Sciatic nerve (tissue), 2 donors: ENCODE measurements at regions of chr10 and their contacts with region 1.

Region 1: DNA sequence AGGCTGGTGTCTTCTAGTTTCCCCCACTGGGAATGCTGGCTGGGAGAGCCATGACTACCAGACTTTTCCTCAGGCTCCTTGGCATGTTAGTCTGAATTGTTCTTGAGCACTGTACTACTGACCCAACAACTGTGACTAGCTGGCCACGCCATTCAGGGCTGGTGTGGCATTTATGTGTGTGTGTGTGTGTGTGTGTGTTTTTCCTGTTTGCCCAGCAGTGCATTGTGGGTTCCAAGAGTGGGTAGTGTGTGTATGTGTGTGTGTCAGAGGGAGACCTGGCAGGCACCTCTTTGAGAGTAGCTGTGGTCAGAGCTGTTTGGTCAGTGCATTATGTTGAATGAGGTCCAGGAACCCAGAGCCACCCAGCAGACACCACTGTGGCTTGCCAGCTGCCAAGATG is 9.2 kb downstream of the PCBD1 start:
- DNase-seq: no peak
- ATAC-seq: no peak

Region 2: DNA sequence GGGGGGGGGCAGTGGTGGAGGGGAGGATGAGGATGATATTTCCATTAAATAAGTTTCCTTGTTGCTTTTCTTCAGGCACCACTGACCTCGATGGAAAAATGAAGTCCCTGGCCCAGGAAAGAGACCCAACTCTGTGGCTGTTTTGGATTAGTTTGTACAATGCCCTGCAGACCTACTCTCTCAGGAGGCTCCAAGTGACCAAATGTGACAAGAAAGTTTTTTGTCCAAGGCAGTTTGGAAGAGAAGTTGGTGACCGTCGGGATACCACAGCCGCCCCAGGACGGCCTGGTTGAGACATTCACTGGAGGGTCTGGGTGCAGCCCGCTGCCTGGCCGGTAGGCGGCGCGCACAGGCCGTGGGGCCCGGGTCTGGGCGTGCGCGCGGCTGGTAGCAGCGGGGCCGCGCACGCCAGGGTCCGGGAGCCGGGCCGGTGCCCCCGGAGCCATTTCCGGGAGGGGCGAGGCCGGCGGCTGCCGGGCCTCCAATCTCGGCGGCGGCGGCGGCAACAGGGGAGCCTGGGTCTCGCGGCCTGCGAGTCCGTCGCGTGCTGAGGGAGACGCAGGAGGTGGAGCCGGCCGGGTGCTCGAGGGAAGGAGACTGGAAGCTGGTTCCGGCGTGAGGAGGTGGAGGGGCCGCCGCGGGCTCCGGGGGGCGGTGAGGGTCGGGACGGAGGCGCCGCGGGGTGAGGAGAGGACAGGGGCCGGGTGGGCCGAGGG is 63.5 kb before region 1 on chr10 and contains the start of gene SGPL1:
- intact Hi-C with region 1: loop called (anchors 2 kb)
- DNase-seq: peak; percentile 92
- ATAC-seq: peak; percentile 94
- total RNA-seq, gene SGPL1: 44.6 TPM

Region 3: DNA sequence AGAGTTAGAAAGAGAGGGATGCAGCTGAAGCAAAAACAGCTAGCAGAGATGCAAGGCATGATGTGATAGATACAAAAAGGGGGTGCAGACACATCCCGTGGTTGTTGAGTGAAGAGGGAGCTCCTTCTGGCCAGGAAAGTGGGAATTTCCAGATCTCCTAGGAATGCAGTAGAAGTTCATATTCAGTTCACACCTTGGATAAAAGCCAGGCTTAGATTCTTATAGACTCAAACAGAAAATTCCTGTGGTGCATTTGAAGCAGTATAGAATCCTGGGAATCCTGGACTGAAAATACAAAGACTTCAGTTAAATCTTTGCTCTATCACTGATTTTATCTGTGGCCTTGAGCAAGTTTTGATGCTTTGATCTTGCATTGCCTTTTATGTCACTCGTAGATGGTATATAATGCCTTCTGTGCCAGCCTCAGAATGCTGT is 29.6 kb before region 1 on chr10:
- intact Hi-C with region 1: no loop called
- DNase-seq: no peak
- ATAC-seq: no peak